Activated CD4-positive, alpha-beta T cell treated with anti-CD3 and anti-CD28 coated beads, Interleukin-2, amount 10 ng/mL, durations not matched to agents 24 days and 14 days (primary cell): ENCODE measurements at regions of chr6 and their contacts with region 1.

Region 1: DNA sequence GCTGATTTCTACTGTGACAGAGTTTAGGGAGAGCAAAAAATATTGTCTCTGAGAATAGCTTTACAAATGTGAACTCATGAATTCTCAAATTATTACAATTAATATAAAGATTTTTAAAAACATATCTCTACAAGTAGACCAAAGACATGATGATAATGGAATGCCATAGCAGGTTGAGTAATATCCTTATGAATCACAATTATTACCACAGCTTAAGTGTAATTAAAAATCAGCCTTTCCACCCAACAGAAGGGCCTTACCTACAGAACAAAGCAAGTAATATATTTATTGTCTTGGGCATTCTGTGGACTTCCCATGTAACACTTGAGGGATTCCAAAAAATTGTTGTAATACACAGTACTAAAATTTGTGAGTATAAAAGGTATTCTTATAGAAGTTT is 1099.6 kb upstream of the GJE1 start:
- DNase-seq: no peak
- H3K4me3 Mint-ChIP-seq: no peak overlapping the region
- H3K27ac Mint-ChIP-seq: no peak overlapping the region
- H3K4me1 Mint-ChIP-seq: no peaks in the 10 kb centered on the region
- H3K27me3 Mint-ChIP-seq: no peaks in the 10 kb centered on the region

Region 2: GRCh38 chr6:140486114-140486767 is 546.9 kb before region 1 on chr6:
- intact Hi-C with region 1: no loop called
- DNase-seq: no peak
- H3K4me3 Mint-ChIP-seq: no peak overlapping the region
- H3K27ac Mint-ChIP-seq: peak overlapping the region; percentile 62
- H3K4me1 Mint-ChIP-seq: peaks cover 10% of the 10 kb centered on the region
- H3K27me3 Mint-ChIP-seq: no peaks in the 10 kb centered on the region

Region 3: GRCh38 chr6:140566781-140567231 is 466.3 kb before region 1 on chr6:
- intact Hi-C with region 1: loop called (anchors 5 kb)
- DNase-seq: no peak
- H3K4me3 Mint-ChIP-seq: no peak overlapping the region
- H3K27ac Mint-ChIP-seq: no peak overlapping the region
- H3K4me1 Mint-ChIP-seq: peaks cover 13% of the 10 kb centered on the region
- H3K27me3 Mint-ChIP-seq: peaks cover 2% of the 10 kb centered on the region